B cell (primary cell): ENCODE measurements at regions of chr11 and their contacts with region 1.

Region 1: DNA sequence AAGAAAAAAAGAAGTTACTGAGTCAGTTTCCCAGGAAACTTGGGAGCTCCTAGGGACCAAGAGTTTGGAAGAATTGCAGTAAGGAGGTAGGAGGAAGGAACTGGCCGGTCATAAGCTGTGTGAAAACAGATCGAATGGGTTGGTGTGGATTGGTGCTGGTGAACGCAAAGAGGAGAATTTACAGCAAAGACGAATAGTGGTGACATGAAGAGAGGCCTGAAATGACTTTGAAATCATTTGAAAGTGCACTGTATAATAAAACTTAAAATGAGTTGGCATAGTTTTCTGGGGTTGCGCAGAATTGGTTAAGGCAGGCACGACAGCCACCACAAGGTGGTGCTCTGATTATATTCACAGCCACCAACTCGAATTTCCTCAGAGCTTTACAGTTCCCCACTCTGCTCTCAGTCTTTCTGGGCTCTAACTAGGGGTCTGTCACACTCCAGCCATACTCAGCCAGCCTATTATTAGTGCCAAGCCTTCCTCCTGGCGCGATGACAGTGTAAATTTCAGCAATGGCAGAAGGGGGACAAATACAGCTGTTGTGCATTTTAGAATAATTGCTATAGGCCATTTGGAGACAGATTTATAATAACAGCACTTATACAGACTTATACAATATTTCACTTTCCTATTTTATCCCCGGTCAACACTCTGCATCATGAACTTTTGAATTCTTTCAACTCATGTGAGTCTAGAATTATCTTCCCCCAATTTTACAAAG is 8.3 kb upstream of the HTR3B start:
- DNase-seq: peak; percentile 75
- ATAC-seq: peak; percentile 84
- H3K4me3 ChIP-seq: no peak overlapping the region
- H3K4me3 Mint-ChIP-seq: no peak overlapping the region
- H3K27ac ChIP-seq: no peak overlapping the region
- H3K27ac Mint-ChIP-seq: no peak overlapping the region
- H3K4me1 ChIP-seq: peaks cover 5 to 13% of the 10 kb centered on the region in 2 donors
- H3K4me1 Mint-ChIP-seq: peaks cover 16% of the 10 kb centered on the region
- H3K27me3 ChIP-seq: no peaks in the 10 kb centered on the region
- H3K27me3 Mint-ChIP-seq: no peaks in the 10 kb centered on the region
- CTCF ChIP-seq: peak; percentile 84

Region 2: GRCh38 chr11:113884361-113884836 is 11.9 kb before region 1 on chr11:
- CTCF ChIA-PET with region 1: interaction called, 27 read pairs
- POLR2A ChIA-PET with region 1: no interaction called
- intact Hi-C with region 1: no loop called
- DNase-seq: no peak
- ATAC-seq: no peak
- H3K4me3 ChIP-seq: no peak overlapping the region
- H3K4me3 Mint-ChIP-seq: no peak overlapping the region
- H3K27ac ChIP-seq: no peak overlapping the region
- H3K27ac Mint-ChIP-seq: no peak overlapping the region
- H3K4me1 ChIP-seq: no peaks in the 10 kb centered on the region
- H3K4me1 Mint-ChIP-seq: no peaks in the 10 kb centered on the region
- H3K27me3 ChIP-seq: no peaks in the 10 kb centered on the region
- H3K27me3 Mint-ChIP-seq: no peaks in the 10 kb centered on the region
- CTCF ChIP-seq: no peak

Region 3: DNA sequence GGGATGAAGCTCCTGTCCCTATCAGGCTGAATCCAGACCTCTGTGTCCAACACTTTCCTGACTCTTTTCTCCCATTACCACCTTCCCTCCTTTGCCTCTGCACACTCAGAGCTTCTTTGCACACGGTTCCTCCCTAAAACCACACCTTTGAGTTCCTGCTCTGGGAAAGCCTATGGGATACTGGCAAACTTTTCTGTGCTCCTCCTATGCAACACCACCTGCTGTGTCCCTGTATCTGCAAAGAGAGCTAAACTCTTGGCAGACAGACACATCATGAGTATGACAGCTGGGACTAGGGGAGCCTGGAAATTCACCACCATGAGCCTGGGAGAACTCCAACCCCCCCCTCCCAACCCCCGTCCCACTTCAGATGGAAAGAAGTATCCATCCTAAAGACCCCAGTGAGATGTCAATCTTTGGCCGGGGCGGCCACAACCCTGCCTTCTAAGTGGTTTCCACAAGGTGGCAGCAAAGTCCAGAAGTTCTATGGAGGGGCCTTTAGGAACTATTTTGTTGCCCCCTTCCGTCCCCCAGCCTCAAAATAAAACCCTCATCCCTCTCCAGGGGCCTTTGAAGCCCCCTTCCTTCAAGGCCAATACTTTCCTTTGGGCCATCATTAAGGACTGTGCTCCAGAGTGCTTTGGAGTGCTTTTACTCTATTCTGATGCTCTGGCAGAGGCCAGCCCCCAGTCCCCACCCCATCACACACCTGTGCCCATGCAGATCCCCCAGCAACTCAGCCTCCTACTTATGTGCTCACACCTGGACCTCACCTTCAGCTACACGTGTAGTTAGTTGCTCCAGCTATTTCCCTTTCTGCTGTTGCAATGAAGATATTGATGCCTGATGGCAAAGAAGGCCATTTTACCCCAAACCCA is 98.0 kb after region 1 on chr11:
- CTCF ChIA-PET with region 1: interaction called, 178 read pairs
- POLR2A ChIA-PET with region 1: interaction called, 5 read pairs
- intact Hi-C with region 1: loop called (anchors 1 kb)
- DNase-seq: peak; percentile 66
- ATAC-seq: peak; percentile 66
- H3K4me3 ChIP-seq: no peak overlapping the region
- H3K4me3 Mint-ChIP-seq: no peak overlapping the region
- H3K27ac ChIP-seq: no peak overlapping the region
- H3K27ac Mint-ChIP-seq: no peak overlapping the region
- H3K4me1 ChIP-seq: peaks cover 7 to 20% of the 10 kb centered on the region in 2 donors
- H3K4me1 Mint-ChIP-seq: peaks cover 9% of the 10 kb centered on the region
- H3K27me3 ChIP-seq: peaks cover 0 to 3% (median 0%) of the 10 kb centered on the region in 4 experiments
- H3K27me3 Mint-ChIP-seq: peaks cover 8% of the 10 kb centered on the region
- CTCF ChIP-seq: peak; percentile 79

Region 4: GRCh38 chr11:114180301-114181055 is 284.2 kb after region 1 on chr11:
- CTCF ChIA-PET with region 1: interaction called, 22 read pairs
- POLR2A ChIA-PET with region 1: no interaction called
- intact Hi-C with region 1: no loop called
- DNase-seq: peak; percentile 59
- ATAC-seq: peak; percentile 59
- H3K4me3 ChIP-seq: no peak overlapping the region
- H3K4me3 Mint-ChIP-seq: peak overlapping the region; percentile 53
- H3K27ac ChIP-seq: peak overlapping the region; percentile 79 to 84
- H3K27ac Mint-ChIP-seq: peak overlapping the region; percentile 62
- H3K4me1 ChIP-seq: peaks cover 62 to 72% of the 10 kb centered on the region in 2 donors
- H3K4me1 Mint-ChIP-seq: peaks cover 69% of the 10 kb centered on the region
- H3K27me3 ChIP-seq: no peaks in the 10 kb centered on the region
- H3K27me3 Mint-ChIP-seq: peaks cover 2% of the 10 kb centered on the region
- CTCF ChIP-seq: peak; percentile 31

Region 5: GRCh38 chr11:114197799-114198500 is 301.6 kb after region 1 on chr11:
- CTCF ChIA-PET with region 1: interaction called, 10 read pairs
- POLR2A ChIA-PET with region 1: interaction called, 3 read pairs
- intact Hi-C with region 1: no loop called
- DNase-seq: no peak
- ATAC-seq: no peak
- H3K4me3 ChIP-seq: no peak overlapping the region
- H3K4me3 Mint-ChIP-seq: no peak overlapping the region
- H3K27ac ChIP-seq: no peak overlapping the region
- H3K27ac Mint-ChIP-seq: peak overlapping the region; percentile 10
- H3K4me1 ChIP-seq: peaks cover 27 to 47% of the 10 kb centered on the region in 2 donors
- H3K4me1 Mint-ChIP-seq: peaks cover 39% of the 10 kb centered on the region
- H3K27me3 ChIP-seq: no peaks in the 10 kb centered on the region
- H3K27me3 Mint-ChIP-seq: no peaks in the 10 kb centered on the region
- CTCF ChIP-seq: no peak

Region 6: GRCh38 chr11:115672999-115673411 is 1776.7 kb after region 1 on chr11:
- CTCF ChIA-PET with region 1: no interaction called
- POLR2A ChIA-PET with region 1: no interaction called
- intact Hi-C with region 1: no loop called
- DNase-seq: no peak
- ATAC-seq: no peak
- H3K4me3 ChIP-seq: no peak overlapping the region
- H3K4me3 Mint-ChIP-seq: no peak overlapping the region
- H3K27ac ChIP-seq: no peak overlapping the region
- H3K27ac Mint-ChIP-seq: no peak overlapping the region
- H3K4me1 ChIP-seq: no peaks in the 10 kb centered on the region
- H3K4me1 Mint-ChIP-seq: no peaks in the 10 kb centered on the region
- H3K27me3 ChIP-seq: no peaks in the 10 kb centered on the region
- H3K27me3 Mint-ChIP-seq: peaks cover 4% of the 10 kb centered on the region
- CTCF ChIP-seq: no peak